ENCODE measurements at regions of chr19 and their contacts with region 1.

Region 1: GRCh38 chr19:34345947-34346351 is 19.0 kb upstream of the GPI start:
- DNase-seq: peak; percentile 67 to 80
- H3K4me3 ChIP-seq: no peak overlapping the region
- H3K27ac ChIP-seq: no peak overlapping the region
- H3K4me1 ChIP-seq: no peaks in the 10 kb centered on the region
- H3K27me3 ChIP-seq: no peaks in the 10 kb centered on the region
- CTCF ChIP-seq: peak; percentile 63 to 86 (median 72)
- POLR2A ChIP-seq: no peak

Region 2: GRCh38 chr19:34171877-34172660 is 173.9 kb before region 1 on chr19 and contains the start of gene LSM14A:
- intact Hi-C with region 1: loop called (anchors 10 kb)
- DNase-seq: peak; percentile 92 to 93
- H3K4me3 ChIP-seq: peak within 1 kb of the TSS; percentile 45 to 100 (median 95)
- H3K27ac ChIP-seq: peak within 1 kb of the TSS; percentile 96 to 100 (median 99)
- H3K4me1 ChIP-seq: peaks cover 42 to 44% of the 10 kb centered on the region in 2 donors
- H3K27me3 ChIP-seq: no peaks in the 10 kb centered on the region
- CTCF ChIP-seq: peak in 1 of 6 experiments; percentile 10
- POLR2A ChIP-seq: peak in 1 of 2 donors; percentile 91
- total RNA-seq, gene LSM14A: 137 to 253 (median 168) TPM

Region 3: GRCh38 chr19:34220472-34221063 is 125.4 kb before region 1 on chr19:
- intact Hi-C with region 1: loop called (anchors 10 kb)
- DNase-seq: peak; percentile 60 to 76
- H3K4me3 ChIP-seq: no peak overlapping the region
- H3K27ac ChIP-seq: no peak overlapping the region
- H3K4me1 ChIP-seq: peaks cover 13 to 14% of the 10 kb centered on the region in 2 donors
- H3K27me3 ChIP-seq: no peaks in the 10 kb centered on the region
- CTCF ChIP-seq: peak; percentile 22 to 73 (median 52)
- POLR2A ChIP-seq: no peak

Region 4: GRCh38 chr19:34306213-34306661 is 39.7 kb before region 1 on chr19:
- intact Hi-C with region 1: no loop called
- DNase-seq: no peak
- H3K4me3 ChIP-seq: no peak overlapping the region
- H3K27ac ChIP-seq: peak overlapping the region; percentile 4 to 29 (median 6)
- H3K4me1 ChIP-seq: peaks cover 6 to 30% of the 10 kb centered on the region in 2 donors
- H3K27me3 ChIP-seq: no peaks in the 10 kb centered on the region
- CTCF ChIP-seq: no peak
- POLR2A ChIP-seq: no peak

Region 5: DNA sequence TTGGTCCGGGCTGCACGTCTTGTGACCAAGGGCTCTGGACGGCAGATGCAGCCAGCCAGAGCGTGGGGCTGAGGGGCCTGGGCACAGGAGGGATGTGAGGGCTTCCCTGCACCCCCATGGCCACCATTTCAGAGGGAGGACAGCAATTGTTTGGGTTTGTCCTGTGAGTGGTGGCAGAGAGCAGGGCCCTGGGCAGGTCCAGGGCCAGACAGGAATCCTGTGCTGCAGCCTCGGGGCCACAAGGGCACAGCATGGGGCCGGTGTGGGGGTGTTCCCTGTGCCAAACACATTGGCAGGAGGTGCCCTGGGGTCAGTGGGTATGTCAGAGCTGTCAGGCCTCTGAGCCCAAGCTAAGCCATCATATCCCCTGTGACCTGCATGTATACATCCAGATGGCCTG is 167.8 kb after region 1 on chr19:
- intact Hi-C with region 1: no loop called
- DNase-seq: no peak
- H3K4me3 ChIP-seq: no peak overlapping the region
- H3K27ac ChIP-seq: no peak overlapping the region
- H3K4me1 ChIP-seq: no peaks in the 10 kb centered on the region
- H3K27me3 ChIP-seq: no peaks in the 10 kb centered on the region
- CTCF ChIP-seq: no peak
- POLR2A ChIP-seq: no peak

Measured in thyroid gland (tissue), 4 donors.